GM18951 (cell line): ENCODE measurements at regions of chr22 and their contacts with region 1.

Region 1: GRCh38 chr22:30634471-30635233 is 929 bp upstream of the SLC35E4 start:
- POLR2A ChIP-seq: peak; percentile 36

Region 2: DNA sequence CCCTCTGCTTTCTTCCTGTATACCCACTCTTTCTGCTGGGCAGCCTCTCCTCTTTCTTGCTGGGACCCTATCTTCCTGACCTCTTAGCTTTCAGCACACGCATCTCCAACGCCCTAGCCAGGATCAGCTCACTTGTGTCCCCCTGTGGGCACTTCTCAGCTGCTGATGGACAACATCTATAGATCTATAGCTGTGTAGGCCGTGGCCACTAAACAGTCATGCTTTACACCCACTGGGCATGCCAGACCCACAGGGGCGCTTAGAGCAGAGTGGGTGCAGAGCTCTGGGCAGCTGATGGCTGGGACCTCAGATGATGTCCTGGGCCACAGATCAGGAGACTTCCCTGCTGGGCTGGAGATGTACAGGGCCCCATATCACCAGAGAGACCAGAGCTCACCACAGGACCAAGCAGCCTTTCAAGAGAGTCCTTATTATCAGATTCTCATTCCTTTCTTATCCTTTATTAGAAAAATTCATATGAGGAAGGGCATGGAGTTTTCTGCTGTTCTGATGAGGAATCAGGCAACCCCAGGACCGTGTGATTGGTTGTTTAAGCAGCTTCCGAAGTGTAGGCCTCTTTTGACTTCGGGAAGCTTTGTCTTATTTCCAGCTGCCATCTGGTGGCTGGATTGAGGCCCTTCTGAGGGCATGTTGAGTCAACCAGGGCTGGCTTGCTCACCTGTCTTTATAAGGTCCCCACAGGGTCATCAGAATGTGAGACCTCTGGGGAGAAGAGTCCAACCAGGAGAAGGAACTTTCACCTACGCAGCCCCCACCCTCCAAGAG is 120.5 kb after region 1 on chr22:
- in situ Hi-C with region 1: loop called (anchors 10 kb)
- POLR2A ChIP-seq: no peak